ENCODE measurements at regions of chr17 and their contacts with region 1.

Region 1: DNA sequence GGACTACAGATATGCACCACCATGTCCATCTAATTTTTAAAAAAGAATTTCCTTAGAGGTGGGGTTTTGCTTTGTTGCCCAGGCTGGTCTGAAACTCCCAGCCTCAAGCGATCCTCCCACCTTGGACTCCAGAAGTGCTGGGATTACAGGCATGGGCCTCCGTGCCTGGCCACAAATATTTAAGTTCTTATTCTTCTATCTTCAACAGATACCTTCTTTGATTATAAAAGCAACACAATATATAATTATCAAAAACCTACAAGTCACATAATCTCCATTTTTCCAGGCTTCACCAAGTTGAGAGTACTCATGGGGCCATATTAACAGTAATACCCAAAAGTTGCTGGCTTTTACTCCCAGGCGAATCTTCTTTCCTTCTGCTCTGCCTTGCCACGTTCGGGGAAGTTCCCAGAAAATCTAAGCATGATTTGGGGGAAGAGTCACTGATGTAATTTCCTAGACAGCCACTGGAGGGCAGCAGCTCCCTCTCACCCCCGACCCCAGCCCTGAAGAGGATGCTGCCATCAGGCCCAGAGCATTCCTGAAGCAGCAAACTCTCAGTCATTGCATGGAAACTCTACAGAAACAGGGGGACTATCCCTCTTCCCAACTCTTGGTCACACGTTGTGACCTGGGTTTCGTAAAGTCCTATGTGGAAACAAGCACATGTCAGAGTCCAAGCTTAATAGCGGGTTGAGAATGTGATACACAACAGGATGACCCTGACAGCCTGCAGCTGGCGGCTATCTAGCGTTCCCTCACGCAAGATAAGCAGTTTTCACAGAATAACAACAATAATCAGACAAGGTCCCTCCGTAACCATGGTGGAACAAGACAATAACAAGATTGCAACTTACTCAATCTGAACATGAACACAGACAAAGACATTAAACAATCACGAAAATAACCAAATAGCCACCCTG is 43.9 kb upstream of the DHX40 start:
- H3K4me3 ChIP-seq: no peak overlapping the region
- H3K27ac ChIP-seq: no peak overlapping the region
- H3K4me1 ChIP-seq: no peaks in the 10 kb centered on the region
- CTCF ChIP-seq: peak; percentile 74

Region 2: DNA sequence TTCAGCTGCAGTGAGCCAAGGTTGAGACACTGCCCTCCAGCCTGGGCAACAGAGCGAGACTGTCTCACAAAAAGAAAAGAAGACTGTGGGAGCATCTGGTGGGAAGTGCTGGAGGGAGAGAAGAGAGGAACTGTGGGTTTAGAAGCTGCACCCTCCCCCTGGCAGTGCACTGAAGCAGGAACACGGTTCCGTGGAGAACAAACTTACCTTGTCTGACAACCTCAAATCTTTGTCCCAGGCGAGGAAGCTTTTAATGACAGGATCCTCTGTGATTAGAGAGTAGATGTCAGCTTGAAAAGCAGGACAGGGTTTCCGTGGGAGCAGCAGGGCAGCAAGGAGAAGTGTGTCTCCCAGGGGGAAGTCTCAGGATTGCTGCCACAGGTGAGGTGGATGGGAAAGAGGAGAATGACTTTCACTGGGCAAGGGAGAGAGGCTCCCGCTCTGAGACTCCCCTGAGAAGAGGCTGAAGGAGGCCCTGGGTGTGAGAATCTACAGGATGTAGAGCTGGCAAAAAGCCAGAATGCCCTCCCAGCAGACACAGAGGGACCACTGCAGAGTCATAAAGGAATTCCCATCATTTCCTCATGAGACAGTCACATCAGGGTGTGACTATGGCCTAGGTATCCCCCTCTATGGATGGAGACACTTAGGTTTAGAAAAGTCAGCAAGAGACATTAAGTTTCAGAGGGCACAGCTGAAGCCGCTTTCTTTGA is 343.0 kb before region 1 on chr17:
- CTCF ChIA-PET with region 1: no interaction called
- POLR2A ChIA-PET with region 1: no interaction called
- H3K4me3 ChIP-seq: no peak overlapping the region
- H3K27ac ChIP-seq: no peak overlapping the region
- H3K4me1 ChIP-seq: no peaks in the 10 kb centered on the region
- CTCF ChIP-seq: no peak

Region 3: DNA sequence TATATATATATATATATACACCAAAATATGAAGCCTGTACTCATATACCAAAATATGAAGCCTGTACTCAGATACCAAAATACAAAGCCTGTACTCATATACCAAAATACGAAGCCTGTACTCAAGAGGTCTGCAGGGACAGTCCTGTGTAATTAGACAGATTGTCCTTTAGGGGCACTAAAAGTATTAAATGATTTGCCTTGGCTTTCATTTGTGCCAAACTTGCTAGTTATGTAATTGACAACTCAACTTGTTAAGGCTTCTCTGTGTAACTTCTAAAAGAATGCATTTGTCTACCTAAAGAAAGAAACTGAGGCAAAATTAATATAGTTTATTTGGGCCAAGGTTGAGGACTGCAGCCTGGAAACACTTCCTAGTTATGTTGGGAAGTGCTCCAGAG is 13.1 kb after region 1 on chr17:
- CTCF ChIA-PET with region 1: interaction called, 19 read pairs
- POLR2A ChIA-PET with region 1: no interaction called
- H3K4me3 ChIP-seq: no peak overlapping the region
- H3K27ac ChIP-seq: no peak overlapping the region
- H3K4me1 ChIP-seq: no peaks in the 10 kb centered on the region
- CTCF ChIP-seq: no peak

Region 4: DNA sequence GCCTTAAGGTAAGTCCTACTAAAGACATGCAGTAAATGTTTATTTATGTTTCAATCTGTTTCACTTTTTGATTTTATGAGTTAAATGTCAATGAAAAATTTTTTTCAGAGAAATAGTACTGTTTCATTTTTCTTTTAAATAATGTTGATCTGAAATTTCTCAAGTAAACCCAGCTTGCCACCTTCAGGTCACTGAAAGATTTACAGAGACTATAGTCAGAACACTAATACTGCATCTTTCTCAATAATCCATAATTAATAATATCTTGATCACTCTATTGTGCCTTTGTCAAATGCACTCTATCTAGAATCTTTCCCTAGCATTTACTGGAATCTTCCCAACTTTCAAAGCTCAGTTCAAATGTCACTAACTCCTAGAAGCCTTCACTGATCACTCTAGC is 37.5 kb after region 1 on chr17:
- CTCF ChIA-PET with region 1: interaction called, 39 read pairs
- POLR2A ChIA-PET with region 1: no interaction called
- H3K4me3 ChIP-seq: no peak overlapping the region
- H3K27ac ChIP-seq: no peak overlapping the region
- H3K4me1 ChIP-seq: no peaks in the 10 kb centered on the region
- CTCF ChIP-seq: no peak

Region 5: GRCh38 chr17:59565171-59565969 is 43.9 kb after region 1 on chr17 and contains the start of gene DHX40:
- CTCF ChIA-PET with region 1: interaction called, 39 read pairs
- POLR2A ChIA-PET with region 1: interaction called, 3 read pairs
- H3K4me3 ChIP-seq: peak within 1 kb of the TSS; percentile 90
- H3K27ac ChIP-seq: peak within 1 kb of the TSS; percentile 37; the same call in 1 of the 2 replicates
- H3K4me1 ChIP-seq: peaks cover 5% of the 10 kb centered on the region; the same call in 1 of the 2 replicates
- CTCF ChIP-seq: peak; percentile 7; the same call in 1 of the 2 replicates

Measured in HEK293 (cell line).